ENCODE measurements at regions of chr15 and their contacts with region 1.

Region 1: DNA sequence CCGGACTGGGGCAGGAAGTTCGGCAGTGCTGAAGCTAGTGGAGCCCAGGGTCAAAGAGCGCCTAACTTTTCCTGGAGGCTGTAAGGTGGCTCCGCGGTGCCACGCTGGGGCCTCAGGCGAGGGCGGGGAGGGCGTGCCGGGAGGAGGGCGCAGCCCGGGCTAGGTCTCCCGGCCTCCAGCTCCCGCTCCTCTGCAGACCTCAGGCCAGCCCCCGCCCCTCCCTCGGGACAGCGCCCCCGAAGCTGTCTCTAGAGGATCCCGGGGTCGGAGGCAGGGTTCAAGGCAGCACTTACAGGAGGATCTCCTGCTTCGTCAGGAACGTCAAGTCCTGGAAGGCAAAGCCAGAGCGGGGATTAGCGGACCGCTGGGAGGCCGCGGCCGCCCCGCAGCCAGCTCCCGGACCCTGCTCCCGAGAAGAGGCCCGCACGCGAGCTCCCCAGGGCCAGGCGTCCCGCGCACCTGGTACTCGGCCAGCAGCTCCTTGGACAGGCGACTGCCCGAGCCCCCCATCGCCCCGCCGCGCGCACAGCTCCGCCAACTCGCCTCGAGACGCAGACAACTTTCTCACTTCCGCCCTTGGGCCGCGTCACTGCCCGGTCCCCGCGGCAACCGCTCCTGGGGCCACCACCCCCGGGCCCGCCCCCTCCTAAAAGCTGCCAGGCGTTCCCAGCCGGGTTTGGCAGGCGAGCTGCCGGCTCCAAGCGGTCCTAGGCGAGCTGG is at the start of gene CIB1:
- DNase-seq: peak; percentile 73
- ATAC-seq: peak; percentile 82
- H3K4me3 Mint-ChIP-seq: peak within 1 kb of the TSS; percentile 96
- H3K27ac Mint-ChIP-seq: peak within 1 kb of the TSS; percentile 93
- H3K4me1 Mint-ChIP-seq: peaks cover 45% of the 10 kb centered on the region
- H3K27me3 Mint-ChIP-seq: no peaks in the 10 kb centered on the region
- total RNA-seq, gene CIB1: 129 to 130 TPM

Region 2: DNA sequence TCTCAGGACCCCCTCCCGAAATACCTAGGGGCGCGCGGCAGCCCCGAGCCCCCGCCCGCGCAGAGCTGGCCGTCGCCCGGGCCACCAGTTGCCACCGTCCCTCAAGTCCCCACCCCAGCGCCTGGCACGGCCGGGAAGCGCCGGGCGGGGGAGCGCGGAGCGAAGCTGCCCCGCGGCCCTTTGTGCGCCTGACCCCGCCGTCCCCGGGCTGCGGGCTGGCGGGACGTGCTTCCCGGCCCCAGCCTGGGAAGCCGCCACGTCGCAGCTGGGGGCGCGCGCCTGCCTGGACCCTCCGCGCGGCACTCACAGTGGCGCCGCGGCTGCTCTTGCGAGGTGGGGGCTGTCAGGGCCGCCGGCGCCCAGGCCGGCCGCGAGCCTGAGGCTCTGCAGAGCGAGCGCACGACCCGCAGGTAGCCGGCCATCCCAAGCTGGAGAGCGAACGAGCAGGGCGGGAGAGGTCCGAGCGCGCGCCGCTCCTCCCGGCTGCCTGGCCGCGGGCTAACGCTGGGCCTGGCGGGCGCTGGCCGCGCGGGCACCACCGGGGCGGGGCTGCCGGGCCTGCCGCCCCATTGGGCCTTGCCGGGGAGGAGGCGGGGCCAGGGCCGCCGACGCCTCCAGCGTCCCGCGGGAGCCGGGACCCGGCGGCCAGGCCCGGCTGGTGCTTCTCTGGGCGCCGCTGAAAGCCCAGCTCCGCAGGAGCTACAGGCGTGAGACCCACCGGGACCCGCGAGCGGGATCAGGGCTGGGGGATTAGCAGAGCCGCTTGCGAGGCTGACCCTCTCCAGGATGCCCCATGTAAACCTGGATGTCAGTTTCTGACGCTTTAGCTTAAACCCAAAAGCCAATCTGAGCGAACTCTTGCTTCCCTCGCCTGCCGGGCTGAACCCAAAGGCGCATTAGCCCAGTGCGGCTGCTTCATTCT is 131.3 kb before region 1 on chr15 and contains the start of gene IDH2:
- POLR2A ChIA-PET with region 1: interaction called, 12 read pairs
- DNase-seq: peak; percentile 90
- ATAC-seq: peak; percentile 76
- H3K4me3 Mint-ChIP-seq: peak within 1 kb of the TSS; percentile 87
- H3K27ac Mint-ChIP-seq: peak within 1 kb of the TSS; percentile 96
- H3K4me1 Mint-ChIP-seq: peaks cover 43% of the 10 kb centered on the region
- H3K27me3 Mint-ChIP-seq: peaks cover 5% of the 10 kb centered on the region
- total RNA-seq, gene IDH2: 233 to 260 TPM

Region 3: GRCh38 chr15:90174140-90174875 is 59.2 kb before region 1 on chr15:
- POLR2A ChIA-PET with region 1: no interaction called
- DNase-seq: no peak
- ATAC-seq: no peak
- H3K4me3 Mint-ChIP-seq: no peak overlapping the region
- H3K27ac Mint-ChIP-seq: no peak overlapping the region
- H3K4me1 Mint-ChIP-seq: peaks cover 8% of the 10 kb centered on the region
- H3K27me3 Mint-ChIP-seq: peaks cover 11% of the 10 kb centered on the region

Region 4: GRCh38 chr15:90201130-90201949 is 32.2 kb before region 1 on chr15 and contains the start of gene SEMA4B:
- POLR2A ChIA-PET with region 1: interaction called, 40 read pairs
- DNase-seq: peak; percentile 87
- ATAC-seq: peak; percentile 92
- H3K4me3 Mint-ChIP-seq: peak within 1 kb of the TSS; percentile 83
- H3K27ac Mint-ChIP-seq: peak within 1 kb of the TSS; percentile 84
- H3K4me1 Mint-ChIP-seq: peaks cover 20% of the 10 kb centered on the region
- H3K27me3 Mint-ChIP-seq: peaks cover 9% of the 10 kb centered on the region
- total RNA-seq, gene SEMA4B: 14.1 to 15.4 TPM

Region 5: GRCh38 chr15:90221246-90221900 is 12.2 kb before region 1 on chr15:
- POLR2A ChIA-PET with region 1: interaction called, 12 read pairs
- DNase-seq: no peak
- ATAC-seq: no peak
- H3K4me3 Mint-ChIP-seq: no peak overlapping the region
- H3K27ac Mint-ChIP-seq: no peak overlapping the region
- H3K4me1 Mint-ChIP-seq: peaks cover 5% of the 10 kb centered on the region
- H3K27me3 Mint-ChIP-seq: no peaks in the 10 kb centered on the region

Region 6: DNA sequence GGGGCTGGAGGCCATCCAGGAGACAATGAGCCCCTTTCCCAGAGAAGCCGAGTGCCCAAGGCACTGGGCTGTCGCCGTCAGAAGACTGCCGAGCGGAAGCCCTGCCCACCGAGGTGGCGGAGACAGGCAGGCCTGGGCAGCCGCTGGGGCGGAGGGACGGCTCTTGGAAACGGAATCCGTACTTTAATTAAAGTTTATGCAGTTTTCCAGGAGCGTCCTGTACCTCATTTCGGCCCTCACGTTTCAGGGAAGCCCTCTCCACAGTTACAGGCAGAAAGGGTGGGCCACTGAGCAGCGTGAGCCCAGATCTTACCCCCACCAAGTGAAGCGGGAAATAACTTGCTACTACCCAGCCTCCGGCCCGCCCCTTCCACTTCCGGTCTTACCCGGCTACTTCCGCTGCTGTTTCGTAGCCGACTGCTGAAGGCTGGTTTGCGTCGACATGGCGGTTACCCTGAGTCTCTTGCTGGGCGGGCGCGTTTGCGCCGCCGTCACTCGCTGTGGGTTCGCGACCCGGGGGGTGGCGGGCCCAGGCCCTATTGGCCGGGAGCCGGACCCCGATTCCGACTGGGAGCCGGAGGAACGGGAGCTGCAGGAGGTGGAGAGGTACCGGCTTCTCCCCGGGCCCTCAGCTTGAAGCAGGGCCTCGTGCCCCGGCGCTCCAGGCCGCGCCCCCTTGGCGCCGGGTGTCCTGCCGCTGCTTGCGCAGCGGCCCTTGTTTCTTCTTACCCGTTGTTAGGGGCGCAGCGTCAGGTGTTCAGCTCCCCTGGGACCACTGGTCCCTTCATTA is 31.9 kb after region 1 on chr15 and contains the start of gene NGRN:
- POLR2A ChIA-PET with region 1: interaction called, 29 read pairs
- DNase-seq: peak; percentile 93
- ATAC-seq: peak; percentile 89
- H3K4me3 Mint-ChIP-seq: peak within 1 kb of the TSS; percentile 96
- H3K27ac Mint-ChIP-seq: peak within 1 kb of the TSS; percentile 98
- H3K4me1 Mint-ChIP-seq: peaks cover 32% of the 10 kb centered on the region
- H3K27me3 Mint-ChIP-seq: no peaks in the 10 kb centered on the region
- total RNA-seq, gene NGRN: 34.3 to 35.8 TPM

Region 7: GRCh38 chr15:90286678-90287077 is 53.1 kb after region 1 on chr15:
- POLR2A ChIA-PET with region 1: no interaction called
- DNase-seq: no peak
- ATAC-seq: peak; percentile 68
- H3K4me3 Mint-ChIP-seq: no peak overlapping the region
- H3K27ac Mint-ChIP-seq: no peak overlapping the region
- H3K4me1 Mint-ChIP-seq: peaks cover 2% of the 10 kb centered on the region
- H3K27me3 Mint-ChIP-seq: peaks cover 2% of the 10 kb centered on the region